ENCODE measurements at regions of chr19 and their contacts with region 1.

Region 1: GRCh38 chr19:55461259-55461973 is at the start of gene ISOC2:
- DNase-seq: peak; percentile 100
- ATAC-seq: peak; percentile 96 to 97
- H3K4me3 ChIP-seq: peak within 1 kb of the TSS; percentile 76 to 94 (median 86)
- H3K27ac ChIP-seq: peak within 1 kb of the TSS; percentile 89 to 97 (median 94)
- H3K4me1 ChIP-seq: peaks cover 12 to 13% of the 10 kb centered on the region in 2 donors
- H3K27me3 ChIP-seq: no peaks in the 10 kb centered on the region
- CTCF ChIP-seq: no peak
- POLR2A ChIP-seq: peak; percentile 77 to 82
- total RNA-seq, gene ISOC2: 59.7 to 101 (median 88.7) TPM

Region 2: DNA sequence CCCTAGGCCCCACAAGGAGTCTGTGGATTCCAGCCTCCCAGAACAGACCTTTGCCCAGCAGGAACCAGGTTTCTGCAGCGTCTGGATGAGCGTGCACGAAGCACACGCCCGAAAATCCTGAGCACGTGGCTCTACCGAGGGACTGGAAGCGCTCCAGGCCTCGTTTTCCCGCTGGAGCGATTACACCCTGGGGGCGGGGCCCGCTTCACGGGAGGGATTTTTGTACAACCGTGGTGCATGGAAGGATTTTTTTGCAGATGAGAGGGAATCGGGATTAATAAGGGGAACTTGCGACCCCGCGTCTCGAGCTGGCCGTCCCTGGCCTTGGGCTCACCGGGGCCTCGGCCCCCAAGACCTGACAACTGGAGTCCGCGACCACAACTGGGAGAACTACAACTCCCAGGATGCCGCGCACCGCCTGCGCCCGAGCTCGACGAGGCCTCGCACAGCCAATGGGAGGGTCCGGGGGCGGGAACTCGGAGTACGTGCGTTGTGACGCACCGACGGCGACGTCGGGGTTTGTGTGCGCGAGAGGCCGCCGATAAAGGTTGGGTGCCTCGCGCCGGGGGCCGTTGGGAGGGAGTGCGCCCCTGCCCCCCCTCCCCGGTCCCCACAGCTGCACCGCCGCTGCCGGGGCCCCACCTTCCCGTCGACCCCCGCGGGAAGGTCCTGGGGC is 14.8 kb after region 1 on chr19 and contains the start of gene ZNF628:
- in situ Hi-C with region 1: no loop called
- intact Hi-C with region 1: loop called (anchors 1 kb)
- DNase-seq: peak; percentile 98
- ATAC-seq: peak; percentile 93 to 95
- H3K4me3 ChIP-seq: peak within 1 kb of the TSS; percentile 59 to 90 (median 70)
- H3K27ac ChIP-seq: peak within 1 kb of the TSS; percentile 92 to 97 (median 96)
- H3K4me1 ChIP-seq: peaks cover 16 to 25% of the 10 kb centered on the region in 2 donors
- H3K27me3 ChIP-seq: peaks cover 0 to 3% (median 0%) of the 10 kb centered on the region in 3 donors
- CTCF ChIP-seq: no peak
- POLR2A ChIP-seq: peak; percentile 82 to 85
- total RNA-seq, gene ZNF628: 7.4 to 22.3 (median 14.1) TPM

Region 3: GRCh38 chr19:55624109-55625003 is 162.9 kb after region 1 on chr19 and contains the start of gene ZNF784:
- in situ Hi-C with region 1: no loop called
- intact Hi-C with region 1: no loop called
- DNase-seq: peak; percentile 89 to 91
- ATAC-seq: peak; percentile 76 to 83
- H3K4me3 ChIP-seq: peak within 1 kb of the TSS; percentile 71 to 77 (median 74)
- H3K27ac ChIP-seq: peak within 1 kb of the TSS; percentile 97 to 99 (median 98)
- H3K4me1 ChIP-seq: peaks cover 30 to 37% of the 10 kb centered on the region in 2 donors
- H3K27me3 ChIP-seq: no peaks in the 10 kb centered on the region
- CTCF ChIP-seq: no peak
- POLR2A ChIP-seq: peak; percentile 38 to 49
- total RNA-seq, gene ZNF784: 6.0 to 10.0 (median 8.2) TPM